CD4-positive, alpha-beta T cell (primary cell): ENCODE measurements at regions of chr19 and their contacts with region 1.

Region 1: GRCh38 chr19:51422053-51422448 is 4.6 kb upstream of the SIGLEC10 start:
- DNase-seq: peak; percentile 61 to 89 (median 78)
- ATAC-seq: peak; percentile 79
- H3K4me3 ChIP-seq: no peak overlapping the region
- H3K4me3 Mint-ChIP-seq: no peak overlapping the region
- H3K27ac ChIP-seq: no peak overlapping the region
- H3K27ac Mint-ChIP-seq: no peak overlapping the region
- H3K4me1 ChIP-seq: peaks cover 16% of the 10 kb centered on the region
- H3K4me1 Mint-ChIP-seq: no peaks in the 10 kb centered on the region
- H3K27me3 ChIP-seq: peaks cover 7 to 13% of the 10 kb centered on the region in 2 experiments
- H3K27me3 Mint-ChIP-seq: peaks cover 35% of the 10 kb centered on the region
- CTCF ChIP-seq: peak; percentile 96

Region 2: DNA sequence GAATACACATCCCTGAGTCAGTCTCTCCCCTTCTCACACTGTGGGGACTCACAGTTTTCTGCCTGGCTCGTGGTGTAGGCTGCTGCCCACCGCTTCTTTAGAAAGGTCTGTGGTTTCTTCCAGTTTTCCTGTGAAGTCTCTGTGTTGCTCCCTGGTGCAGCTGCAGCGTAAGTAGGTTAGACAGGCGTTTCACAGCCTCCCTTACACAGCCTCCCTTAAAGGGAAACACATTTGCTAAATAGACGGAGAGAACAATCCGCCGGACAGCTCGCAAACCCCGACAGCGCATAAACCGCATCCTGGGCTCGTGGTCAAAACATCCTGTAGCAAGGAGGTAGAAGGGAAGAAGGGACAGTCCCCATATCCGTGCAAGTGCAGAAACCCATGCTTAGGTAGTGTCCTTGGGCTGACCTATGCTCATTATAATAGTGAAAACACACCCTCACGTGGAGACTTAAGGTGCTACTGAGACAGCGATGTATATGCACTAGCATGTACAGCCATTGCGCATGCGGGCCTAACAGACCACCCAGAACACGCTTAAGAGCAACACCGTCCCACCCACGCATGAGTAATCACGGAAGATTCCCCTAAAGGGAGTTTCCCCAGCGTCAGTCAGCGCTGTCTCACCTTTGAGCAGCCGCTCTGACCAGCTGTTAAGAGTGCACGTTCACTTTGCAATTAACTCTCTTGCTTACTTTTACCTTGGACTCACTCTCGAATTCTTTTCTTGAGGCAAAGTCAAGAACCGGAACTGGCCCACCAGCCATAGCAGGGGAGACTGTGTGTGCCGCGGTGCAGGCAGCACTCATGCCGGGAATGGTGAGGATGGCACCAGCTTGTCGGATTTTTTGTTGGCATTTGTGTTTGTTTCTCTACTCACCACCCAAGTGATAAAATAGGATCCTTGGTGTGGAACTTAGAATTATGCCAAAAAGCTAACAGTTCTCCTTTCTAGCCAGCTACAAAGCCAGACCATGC is 19.6 kb after region 1 on chr19:
- CTCF ChIA-PET with region 1: interaction called, 8 read pairs
- POLR2A ChIA-PET with region 1: interaction called, 6 read pairs
- intact Hi-C with region 1: loop called (anchors 1 kb)
- DNase-seq: peak; percentile 50 to 92 (median 70)
- ATAC-seq: peak; percentile 90
- H3K4me3 ChIP-seq: peak overlapping the region; percentile 44
- H3K4me3 Mint-ChIP-seq: peak overlapping the region; percentile 78
- H3K27ac ChIP-seq: peak overlapping the region; percentile 49 to 68
- H3K27ac Mint-ChIP-seq: peak overlapping the region; percentile 45
- H3K4me1 ChIP-seq: peaks cover 29% of the 10 kb centered on the region
- H3K4me1 Mint-ChIP-seq: peaks cover 38% of the 10 kb centered on the region
- H3K27me3 ChIP-seq: peaks cover 0 to 2% of the 10 kb centered on the region in 2 experiments
- H3K27me3 Mint-ChIP-seq: peaks cover 4% of the 10 kb centered on the region
- CTCF ChIP-seq: no peak

Region 3: DNA sequence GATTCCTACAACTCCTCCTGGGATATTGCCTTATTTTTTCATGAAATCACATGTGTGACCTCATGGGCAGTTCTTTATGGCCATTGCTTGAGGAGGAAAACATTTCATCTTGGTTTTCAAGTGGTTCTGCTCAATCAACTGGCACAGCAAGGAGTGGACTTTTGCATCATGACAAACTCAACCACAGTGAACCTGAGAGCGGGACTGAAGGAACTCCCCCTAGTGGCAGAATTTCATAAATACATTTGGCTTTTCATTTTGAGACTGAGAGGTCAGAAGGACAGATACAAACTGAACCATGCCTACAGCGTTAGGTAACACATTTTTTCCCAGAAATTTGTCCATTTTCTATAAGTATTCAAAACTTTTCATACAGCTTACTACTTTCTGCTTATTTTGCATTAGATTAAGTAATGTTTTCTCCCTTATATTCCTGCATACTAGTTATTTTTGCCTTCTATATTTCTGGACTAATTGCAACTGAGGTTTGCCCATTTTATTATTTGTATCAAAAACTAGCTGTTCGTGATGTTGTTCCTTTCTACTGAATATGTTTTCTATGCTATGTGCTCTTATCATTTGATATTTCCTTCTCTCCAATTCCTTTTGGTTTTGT is 92.9 kb after region 1 on chr19:
- CTCF ChIA-PET with region 1: interaction called, 4 read pairs
- POLR2A ChIA-PET with region 1: no interaction called
- intact Hi-C with region 1: loop called (anchors 1 to 5 kb)
- DNase-seq: peak in 7 of 14 experiments; percentile 4 to 70 (median 17)
- ATAC-seq: no peak
- H3K4me3 ChIP-seq: no peak overlapping the region
- H3K4me3 Mint-ChIP-seq: no peak overlapping the region
- H3K27ac ChIP-seq: no peak overlapping the region
- H3K27ac Mint-ChIP-seq: no peak overlapping the region
- H3K4me1 ChIP-seq: no peaks in the 10 kb centered on the region
- H3K4me1 Mint-ChIP-seq: no peaks in the 10 kb centered on the region
- H3K27me3 ChIP-seq: peaks cover 0 to 7% of the 10 kb centered on the region in 2 experiments
- H3K27me3 Mint-ChIP-seq: peaks cover 65% of the 10 kb centered on the region
- CTCF ChIP-seq: peak; percentile 93

Region 4: GRCh38 chr19:51660975-51661600 is 239.0 kb after region 1 on chr19:
- CTCF ChIA-PET with region 1: no interaction called
- POLR2A ChIA-PET with region 1: no interaction called
- intact Hi-C with region 1: loop called (anchors 1 to 2 kb)
- DNase-seq: peak in 11 of 14 experiments; percentile 17 to 75 (median 29)
- ATAC-seq: no peak
- H3K4me3 ChIP-seq: no peak overlapping the region
- H3K4me3 Mint-ChIP-seq: no peak overlapping the region
- H3K27ac ChIP-seq: no peak overlapping the region
- H3K27ac Mint-ChIP-seq: no peak overlapping the region
- H3K4me1 ChIP-seq: peaks cover 3% of the 10 kb centered on the region
- H3K4me1 Mint-ChIP-seq: peaks cover 4% of the 10 kb centered on the region
- H3K27me3 ChIP-seq: peaks cover 0 to 15% of the 10 kb centered on the region in 2 experiments
- H3K27me3 Mint-ChIP-seq: peaks cover 46% of the 10 kb centered on the region
- CTCF ChIP-seq: no peak